Panc1 (cell line): ENCODE measurements at regions of chr9 and their contacts with region 1.

Region 1: DNA sequence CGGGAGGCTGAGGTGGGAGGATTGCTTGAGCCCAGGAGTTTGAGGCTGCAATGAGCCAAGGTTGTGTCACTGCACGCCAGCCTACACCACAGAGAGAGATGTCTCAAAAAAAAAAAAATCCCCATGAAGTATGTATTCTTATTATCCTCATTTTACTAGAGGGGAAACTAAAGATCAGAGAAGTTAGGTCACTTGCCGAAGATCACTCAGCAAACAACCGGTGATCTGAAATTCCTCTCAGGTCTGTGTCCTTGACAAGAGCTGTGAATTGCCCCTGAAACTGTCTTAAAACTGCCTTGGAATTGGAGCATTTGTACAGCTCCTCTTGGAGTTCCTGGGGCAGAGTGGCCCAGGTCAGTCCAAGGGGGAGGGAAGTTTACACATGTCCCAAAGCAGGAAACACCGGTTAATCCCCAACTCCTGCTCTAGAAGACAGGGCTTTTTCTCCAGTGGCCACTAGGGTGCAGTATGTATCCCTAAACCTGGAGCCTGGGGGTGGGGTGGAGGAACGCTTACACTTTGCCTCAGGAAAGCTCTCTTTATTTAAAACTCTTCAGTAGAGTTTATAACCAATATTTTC is 27.6 kb downstream of the AQP7 start:
- DNase-seq: peak; percentile 39
- ATAC-seq: peak; percentile 85
- H3K4me3 ChIP-seq: no peak overlapping the region
- H3K27ac ChIP-seq: no peak overlapping the region
- H3K4me1 ChIP-seq: 0 out of 2 replicates have a peak, but pooled peaks cover 2% of the 10 kb centered on the region
- H3K27me3 ChIP-seq: no peaks in the 10 kb centered on the region
- CTCF ChIP-seq: no peak

Region 2: DNA sequence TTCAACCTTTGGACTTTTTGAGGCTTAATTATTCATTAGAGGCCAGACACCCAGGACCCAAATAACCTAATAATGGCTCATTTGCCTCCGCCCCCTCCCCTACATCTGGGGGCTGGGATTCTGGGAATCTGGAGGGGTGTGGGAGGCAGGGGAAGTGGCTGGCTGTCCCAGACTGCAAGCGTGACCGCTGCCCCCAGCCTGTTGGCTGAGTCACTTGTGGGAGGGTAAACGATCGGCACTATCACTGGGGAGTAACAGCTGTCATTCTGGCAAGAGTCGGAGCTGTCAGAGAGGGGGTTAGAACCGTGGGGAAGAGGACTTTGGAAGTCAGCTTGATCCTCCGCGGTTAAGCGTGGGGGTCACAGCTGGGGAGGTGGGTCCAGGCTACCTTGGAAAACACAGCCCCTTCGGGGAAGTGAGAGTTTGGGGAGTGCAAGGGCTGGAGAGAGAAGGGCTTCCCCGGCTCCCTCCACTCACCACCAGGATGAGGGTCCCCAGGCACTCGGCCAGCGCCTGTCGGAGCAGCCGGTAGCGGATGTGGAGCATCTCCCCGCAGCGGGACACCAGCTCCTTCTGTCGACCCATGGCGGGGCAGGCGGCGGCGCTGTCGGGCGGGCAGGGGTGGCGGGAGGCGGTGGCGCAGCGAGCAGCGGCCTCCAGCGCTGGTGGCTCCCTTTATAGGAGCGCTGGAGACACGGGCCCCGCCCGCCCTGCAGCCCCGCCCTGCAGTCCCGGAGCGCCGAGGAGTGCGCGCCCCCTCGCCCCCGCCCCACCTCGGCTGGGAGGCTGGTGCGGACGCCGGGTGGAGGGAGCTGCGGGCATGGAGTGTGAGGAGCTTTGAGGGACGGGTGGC is 72.4 kb after region 1 on chr9 and contains the start of gene AQP3:
- CTCF ChIA-PET with region 1: interaction called, 14 read pairs
- POLR2A ChIA-PET with region 1: no interaction called
- in situ Hi-C with region 1: no loop called
- intact Hi-C with region 1: no loop called
- DNase-seq: no peak
- ATAC-seq: peak; percentile 89
- H3K4me3 ChIP-seq: peak within 1 kb of the TSS; percentile 20 to 37
- H3K27ac ChIP-seq: no peak within 1 kb of the TSS
- H3K4me1 ChIP-seq: peaks cover 7% of the 10 kb centered on the region; the same call in 1 of the 2 replicates
- H3K27me3 ChIP-seq: peaks cover 3% of the 10 kb centered on the region
- CTCF ChIP-seq: no peak
- total RNA-seq, gene AQP3: 1.0 TPM

Region 3: DNA sequence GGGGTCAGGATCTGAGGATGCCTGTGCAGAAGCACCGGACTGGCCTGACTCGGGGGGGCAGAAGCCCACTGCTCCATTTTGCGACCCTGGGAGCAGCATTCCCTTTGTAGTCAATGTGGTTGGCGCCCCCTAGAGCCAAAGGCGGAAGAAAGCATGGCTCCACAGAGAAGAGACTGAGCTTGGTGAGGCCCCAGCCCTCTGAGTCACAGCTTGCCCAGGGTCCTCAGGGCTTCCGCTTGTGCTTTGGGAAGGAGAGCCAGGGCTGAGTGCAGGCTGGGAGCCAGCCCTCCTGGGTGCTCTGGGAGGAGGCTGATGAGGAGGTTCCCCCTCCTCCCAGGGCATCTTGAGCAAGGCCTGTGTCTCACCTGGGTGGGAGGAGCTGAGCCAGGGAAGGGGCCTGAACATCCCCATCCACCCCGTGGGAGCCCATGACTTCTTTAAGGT is 78.1 kb after region 1 on chr9:
- CTCF ChIA-PET with region 1: interaction called, 12 read pairs
- POLR2A ChIA-PET with region 1: no interaction called
- in situ Hi-C with region 1: no loop called
- intact Hi-C with region 1: no loop called
- DNase-seq: no peak
- ATAC-seq: peak; percentile 74
- H3K4me3 ChIP-seq: no peak overlapping the region
- H3K27ac ChIP-seq: no peak overlapping the region
- H3K4me1 ChIP-seq: no peaks in the 10 kb centered on the region
- H3K27me3 ChIP-seq: peaks cover 2% of the 10 kb centered on the region
- CTCF ChIP-seq: no peak

Region 4: DNA sequence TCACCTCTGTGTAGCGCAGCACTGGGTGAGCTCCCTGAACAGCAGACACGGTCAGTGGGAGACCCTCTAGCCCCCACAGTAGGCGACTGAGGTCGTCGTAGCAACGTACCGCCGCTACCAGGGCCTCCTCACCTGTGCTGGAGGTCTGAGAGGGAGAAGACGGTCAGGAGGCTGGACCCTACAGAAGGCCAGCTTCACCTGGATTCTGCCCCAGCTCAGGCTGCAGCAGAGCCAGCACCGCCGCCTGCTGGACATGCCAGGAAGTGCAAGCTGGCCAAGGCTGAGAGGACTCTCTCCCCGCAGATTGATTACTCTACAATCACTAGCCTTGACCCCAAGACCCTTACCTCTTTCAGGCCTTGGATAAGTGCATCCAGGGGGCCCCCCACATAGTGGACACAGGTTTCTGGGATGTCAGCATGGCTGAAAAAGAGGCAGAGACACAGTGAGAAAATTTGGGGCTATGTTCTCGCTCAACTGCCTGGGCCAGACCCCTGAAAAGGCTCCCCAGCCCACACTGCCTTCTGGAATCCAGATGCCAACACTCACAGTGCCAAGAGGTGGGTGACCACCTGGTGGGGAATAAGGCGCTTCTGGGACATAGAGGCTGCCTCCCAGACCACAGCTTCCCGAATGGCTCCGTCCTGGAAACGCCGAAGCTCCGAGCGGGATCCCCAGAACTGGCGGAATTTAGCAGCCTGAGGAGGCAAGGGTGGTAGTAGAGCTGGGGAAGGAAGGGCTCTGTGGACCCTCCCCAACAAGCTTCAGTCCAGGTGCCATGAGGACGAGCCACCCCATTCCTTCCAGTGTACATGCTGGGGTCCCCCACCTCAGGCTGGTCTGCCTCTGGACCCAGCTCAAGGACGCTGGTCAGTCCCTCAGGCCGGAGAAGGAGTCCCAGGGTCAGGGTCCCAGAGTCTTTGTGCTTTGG is 92.1 kb after region 1 on chr9:
- CTCF ChIA-PET with region 1: interaction called, 11 read pairs
- POLR2A ChIA-PET with region 1: no interaction called
- in situ Hi-C with region 1: no loop called
- intact Hi-C with region 1: no loop called
- DNase-seq: no peak
- ATAC-seq: peak; percentile 81
- H3K4me3 ChIP-seq: no peak overlapping the region
- H3K27ac ChIP-seq: no peak overlapping the region
- H3K4me1 ChIP-seq: 0 out of 2 replicates have a peak, but pooled peaks cover under 1% of the 10 kb centered on the region
- H3K27me3 ChIP-seq: no peaks in the 10 kb centered on the region
- CTCF ChIP-seq: no peak